Caco-2 (cell line): ENCODE measurements at regions of chr1 and their contacts with region 1.

Region 1: DNA sequence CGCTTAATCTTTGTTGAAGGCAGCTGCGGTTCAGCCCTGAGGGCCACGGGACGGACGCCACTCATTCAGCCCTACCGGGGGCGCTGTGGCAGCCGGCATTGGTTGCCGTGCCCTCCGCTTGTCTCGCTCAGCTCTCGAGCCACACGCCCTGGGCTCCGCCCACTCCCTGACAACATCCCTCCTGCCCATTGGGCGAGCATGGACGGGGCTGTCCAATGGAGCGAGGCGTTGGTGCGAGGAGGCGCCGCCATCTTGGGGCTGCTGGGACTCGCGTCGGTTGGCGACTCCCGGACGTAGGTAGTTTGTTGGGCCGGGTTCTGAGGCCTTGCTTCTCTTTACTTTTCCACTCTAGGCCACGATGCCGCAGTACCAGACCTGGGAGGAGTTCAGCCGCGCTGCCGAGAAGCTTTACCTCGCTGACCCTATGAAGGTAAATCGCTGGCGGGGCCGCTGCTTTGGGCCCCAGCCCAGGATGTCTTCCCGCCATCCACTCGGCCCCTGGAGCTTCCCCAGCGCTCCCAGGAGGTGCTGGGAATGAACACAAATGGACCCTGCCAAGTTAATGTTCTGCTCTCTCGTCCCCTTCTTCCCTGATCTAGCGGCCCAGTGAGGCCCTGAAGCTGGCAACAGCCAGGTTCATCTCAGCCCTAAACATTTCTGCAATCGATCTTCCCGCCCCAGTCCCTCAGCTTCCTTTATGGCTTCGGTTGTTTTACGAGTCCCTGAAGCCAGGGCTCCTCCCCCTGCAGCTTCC is at the start of gene SRP9:
- DNase-seq: peak; percentile 99
- H3K4me3 ChIP-seq: peak within 1 kb of the TSS; percentile 94
- H3K4me3 Mint-ChIP-seq: no peak within 1 kb of the TSS
- H3K27ac Mint-ChIP-seq: no peak within 1 kb of the TSS
- H3K4me1 ChIP-seq: peaks cover 2% of the 10 kb centered on the region
- H3K4me1 Mint-ChIP-seq: peaks cover 17% of the 10 kb centered on the region
- H3K27me3 ChIP-seq: no peaks in the 10 kb centered on the region
- H3K27me3 Mint-ChIP-seq: no peaks in the 10 kb centered on the region
- CTCF ChIP-seq: peak; percentile 74 to 93
- total RNA-seq, gene SRP9: 261 and 276 TPM in 2 replicates

Region 2: GRCh38 chr1:225354906-225355305 is 422.9 kb before region 1 on chr1:
- CTCF ChIA-PET with region 1: no interaction called
- POLR2A ChIA-PET with region 1: no interaction called
- intact Hi-C with region 1: no loop called
- DNase-seq: no peak
- H3K4me3 ChIP-seq: no peak overlapping the region
- H3K4me3 Mint-ChIP-seq: no peak overlapping the region
- H3K27ac Mint-ChIP-seq: no peak overlapping the region
- H3K4me1 ChIP-seq: no peaks in the 10 kb centered on the region
- H3K4me1 Mint-ChIP-seq: peaks cover 6% of the 10 kb centered on the region
- H3K27me3 ChIP-seq: no peaks in the 10 kb centered on the region
- H3K27me3 Mint-ChIP-seq: peaks cover 16% of the 10 kb centered on the region
- CTCF ChIP-seq: no peak

Region 3: GRCh38 chr1:225474986-225475820 is 302.6 kb before region 1 on chr1:
- CTCF ChIA-PET with region 1: interaction called, 15 read pairs
- POLR2A ChIA-PET with region 1: interaction called, 3 read pairs
- intact Hi-C with region 1: loop called (anchors 1 kb)
- DNase-seq: peak in 1 of 2 experiments; percentile 81
- H3K4me3 ChIP-seq: no peak overlapping the region
- H3K4me3 Mint-ChIP-seq: no peak overlapping the region
- H3K27ac Mint-ChIP-seq: no peak overlapping the region
- H3K4me1 ChIP-seq: peaks cover 11% of the 10 kb centered on the region
- H3K4me1 Mint-ChIP-seq: no peaks in the 10 kb centered on the region
- H3K27me3 ChIP-seq: no peaks in the 10 kb centered on the region
- H3K27me3 Mint-ChIP-seq: no peaks in the 10 kb centered on the region
- CTCF ChIP-seq: peak; percentile 98 to 100

Region 4: GRCh38 chr1:225746361-225747179 is 31.2 kb before region 1 on chr1:
- CTCF ChIA-PET with region 1: interaction called, 14 read pairs
- POLR2A ChIA-PET with region 1: interaction called, 6 read pairs
- intact Hi-C with region 1: no loop called
- DNase-seq: peak; percentile 59 to 63
- H3K4me3 ChIP-seq: peak overlapping the region; percentile 19; the same call in 1 of the 2 replicates
- H3K4me3 Mint-ChIP-seq: peak overlapping the region; percentile 5
- H3K27ac Mint-ChIP-seq: peak overlapping the region; percentile 69
- H3K4me1 ChIP-seq: peaks cover 13% of the 10 kb centered on the region
- H3K4me1 Mint-ChIP-seq: no peaks in the 10 kb centered on the region
- H3K27me3 ChIP-seq: no peaks in the 10 kb centered on the region
- H3K27me3 Mint-ChIP-seq: no peaks in the 10 kb centered on the region
- CTCF ChIP-seq: no peak

Region 5: DNA sequence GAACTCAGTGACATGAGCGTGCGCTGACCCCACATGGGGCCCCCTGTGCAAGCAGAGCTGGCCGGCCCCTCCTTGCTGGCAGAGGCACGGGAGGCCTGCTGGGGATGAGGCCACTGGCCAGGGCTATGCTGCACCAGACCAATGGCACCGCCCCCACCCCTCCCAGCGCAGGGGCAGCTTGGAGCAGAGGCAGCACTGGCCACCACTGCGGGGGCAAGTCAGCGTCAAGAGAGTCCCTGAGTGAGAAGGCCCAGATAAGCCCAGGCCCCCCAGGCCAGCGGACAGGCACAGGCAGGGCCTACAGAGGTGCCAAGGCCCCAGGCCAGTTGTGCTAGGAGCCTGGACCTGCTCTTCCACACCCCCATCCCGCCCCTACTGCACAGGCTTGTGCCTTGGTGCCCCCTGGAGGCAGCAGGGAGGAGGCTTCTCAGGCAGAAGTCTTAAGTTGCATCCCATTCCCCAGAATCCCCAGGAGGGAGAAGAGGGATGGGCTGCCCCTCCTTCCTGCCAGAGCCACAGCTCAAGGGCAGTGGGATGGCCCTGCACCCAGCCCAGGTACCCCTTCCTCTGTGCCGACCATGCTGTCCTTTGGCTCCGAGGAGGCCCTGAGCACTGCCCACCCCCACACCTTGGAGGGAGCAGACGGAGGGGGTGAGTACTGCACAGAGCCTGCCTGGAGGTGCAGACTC is 68.0 kb after region 1 on chr1:
- CTCF ChIA-PET with region 1: interaction called, 3 read pairs
- POLR2A ChIA-PET with region 1: no interaction called
- intact Hi-C with region 1: loop called (anchors 1 kb)
- DNase-seq: peak; percentile 85 to 87
- H3K4me3 ChIP-seq: no peak overlapping the region
- H3K4me3 Mint-ChIP-seq: no peak overlapping the region
- H3K27ac Mint-ChIP-seq: no peak overlapping the region
- H3K4me1 ChIP-seq: no peaks in the 10 kb centered on the region
- H3K4me1 Mint-ChIP-seq: no peaks in the 10 kb centered on the region
- H3K27me3 ChIP-seq: no peaks in the 10 kb centered on the region
- H3K27me3 Mint-ChIP-seq: no peaks in the 10 kb centered on the region
- CTCF ChIP-seq: peak; percentile 82

Region 6: GRCh38 chr1:225923692-225924555 is 146.2 kb after region 1 on chr1 and contains the start of gene PYCR2:
- CTCF ChIA-PET with region 1: interaction called, 9 read pairs
- POLR2A ChIA-PET with region 1: interaction called, 13 read pairs
- intact Hi-C with region 1: no loop called
- DNase-seq: peak; percentile 95 to 98
- H3K4me3 ChIP-seq: peak within 1 kb of the TSS; percentile 81
- H3K4me3 Mint-ChIP-seq: peak within 1 kb of the TSS; percentile 95
- H3K27ac Mint-ChIP-seq: peak within 1 kb of the TSS; percentile 94
- H3K4me1 ChIP-seq: no peaks in the 10 kb centered on the region
- H3K4me1 Mint-ChIP-seq: no peaks in the 10 kb centered on the region
- H3K27me3 ChIP-seq: no peaks in the 10 kb centered on the region
- H3K27me3 Mint-ChIP-seq: no peaks in the 10 kb centered on the region
- CTCF ChIP-seq: no peak
- total RNA-seq, gene PYCR2: 69.7 and 73.7 TPM in 2 replicates

Region 7: DNA sequence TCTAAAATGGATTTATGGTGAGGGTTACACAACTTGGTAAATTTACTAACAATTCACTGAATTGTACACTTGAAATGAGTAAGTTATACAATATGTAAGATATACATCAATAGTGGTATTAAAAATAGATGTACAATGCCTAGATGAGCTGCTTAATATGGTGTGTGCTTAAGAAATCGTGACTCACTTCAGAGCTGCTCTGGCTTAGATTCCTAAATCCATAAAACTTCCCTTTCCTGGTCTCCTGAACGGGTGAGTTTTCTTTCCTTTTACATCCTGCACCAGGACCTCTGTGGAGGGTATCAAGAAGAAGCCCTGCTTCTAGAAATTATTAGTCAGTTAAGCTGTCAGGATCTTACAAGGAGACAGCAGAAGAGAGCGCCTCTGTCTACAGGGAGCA is 315.2 kb after region 1 on chr1:
- CTCF ChIA-PET with region 1: no interaction called
- POLR2A ChIA-PET with region 1: no interaction called
- intact Hi-C with region 1: no loop called
- DNase-seq: no peak
- H3K4me3 ChIP-seq: no peak overlapping the region
- H3K4me3 Mint-ChIP-seq: no peak overlapping the region
- H3K27ac Mint-ChIP-seq: no peak overlapping the region
- H3K4me1 ChIP-seq: peaks cover 5% of the 10 kb centered on the region; the same call in 1 of the 2 replicates
- H3K4me1 Mint-ChIP-seq: peaks cover 11% of the 10 kb centered on the region
- H3K27me3 ChIP-seq: no peaks in the 10 kb centered on the region
- H3K27me3 Mint-ChIP-seq: no peaks in the 10 kb centered on the region
- CTCF ChIP-seq: no peak